Activated B cell treated with CpG ODN at 0.5 μM for 24 hours (primary cell): ENCODE measurements at regions of chr14 and their contacts with region 1.

Region 1: DNA sequence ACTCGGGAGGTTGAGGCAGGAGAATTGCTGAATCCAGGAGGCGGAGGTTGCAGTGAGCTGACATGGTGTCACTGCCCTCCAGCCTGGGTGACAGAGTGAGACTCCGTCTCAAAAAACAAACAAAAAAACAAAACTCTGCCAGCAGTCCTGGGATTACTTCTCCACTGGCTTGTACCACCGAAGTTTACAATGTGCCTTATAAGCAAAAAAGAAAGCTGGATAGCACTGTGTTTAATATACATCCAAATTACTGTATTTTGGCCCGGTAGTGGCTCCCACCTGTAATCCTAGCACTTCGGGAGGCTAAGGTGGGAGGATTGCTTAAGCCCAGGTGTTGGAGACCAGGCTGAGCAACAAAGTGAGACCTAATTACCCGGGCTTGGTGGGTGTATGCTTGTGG is 16.7 kb downstream of the HOMEZ start:
- DNase-seq: no peak
- ATAC-seq: no peak
- H3K4me3 Mint-ChIP-seq: no peak overlapping the region
- H3K27ac Mint-ChIP-seq: no peak overlapping the region
- H3K4me1 Mint-ChIP-seq: no peaks in the 10 kb centered on the region
- H3K27me3 Mint-ChIP-seq: peaks cover 13% of the 10 kb centered on the region
- CTCF ChIP-seq: no peak

Region 2: DNA sequence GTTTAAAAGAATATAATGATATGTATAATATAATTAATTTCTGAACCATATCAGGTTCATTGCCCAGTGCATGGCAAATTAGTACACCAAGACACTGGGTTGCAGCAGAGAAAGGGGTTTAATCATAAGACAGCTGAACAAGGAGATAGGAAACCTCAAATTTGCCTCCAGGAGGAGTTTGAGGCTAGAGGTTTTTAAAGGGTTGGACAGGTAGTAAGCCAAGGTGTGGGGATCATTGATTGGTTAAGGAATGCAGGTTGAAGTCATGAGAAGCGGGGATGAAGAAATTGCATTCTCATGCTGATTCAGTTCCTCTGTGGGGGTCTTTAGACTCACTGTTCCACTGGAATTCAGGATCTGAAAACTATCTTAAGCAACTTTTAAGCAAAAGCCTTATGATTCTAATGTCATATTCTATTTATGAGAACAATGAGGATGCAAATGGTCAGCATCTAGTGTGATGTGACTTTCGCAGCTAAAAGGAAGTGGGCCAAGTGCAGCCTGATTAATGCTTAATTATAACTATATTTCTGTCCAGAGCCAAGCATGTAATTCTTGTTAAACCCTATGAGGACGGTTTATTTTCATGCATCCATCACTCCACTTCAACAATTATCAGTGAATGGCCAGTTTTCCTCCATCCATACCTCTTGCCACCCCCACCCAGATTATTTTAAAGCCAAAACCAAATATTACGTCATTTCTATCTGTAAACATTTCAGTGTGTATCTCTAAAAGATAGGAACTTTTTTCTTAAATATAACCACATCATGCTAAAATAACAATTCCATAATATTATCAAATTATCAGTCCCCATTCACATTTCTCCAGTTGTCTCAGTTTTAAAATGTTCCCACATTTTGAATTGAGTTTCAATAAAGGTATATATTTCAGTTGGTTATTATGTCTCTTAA is 16.5 kb before region 1 on chr14:
- CTCF ChIA-PET with region 1: no interaction called
- POLR2A ChIA-PET with region 1: no interaction called
- intact Hi-C with region 1: no loop called
- DNase-seq: no peak
- ATAC-seq: no peak
- H3K4me3 Mint-ChIP-seq: no peak overlapping the region
- H3K27ac Mint-ChIP-seq: no peak overlapping the region
- H3K4me1 Mint-ChIP-seq: no peaks in the 10 kb centered on the region
- H3K27me3 Mint-ChIP-seq: peaks cover 22% of the 10 kb centered on the region
- CTCF ChIP-seq: no peak

Region 3: DNA sequence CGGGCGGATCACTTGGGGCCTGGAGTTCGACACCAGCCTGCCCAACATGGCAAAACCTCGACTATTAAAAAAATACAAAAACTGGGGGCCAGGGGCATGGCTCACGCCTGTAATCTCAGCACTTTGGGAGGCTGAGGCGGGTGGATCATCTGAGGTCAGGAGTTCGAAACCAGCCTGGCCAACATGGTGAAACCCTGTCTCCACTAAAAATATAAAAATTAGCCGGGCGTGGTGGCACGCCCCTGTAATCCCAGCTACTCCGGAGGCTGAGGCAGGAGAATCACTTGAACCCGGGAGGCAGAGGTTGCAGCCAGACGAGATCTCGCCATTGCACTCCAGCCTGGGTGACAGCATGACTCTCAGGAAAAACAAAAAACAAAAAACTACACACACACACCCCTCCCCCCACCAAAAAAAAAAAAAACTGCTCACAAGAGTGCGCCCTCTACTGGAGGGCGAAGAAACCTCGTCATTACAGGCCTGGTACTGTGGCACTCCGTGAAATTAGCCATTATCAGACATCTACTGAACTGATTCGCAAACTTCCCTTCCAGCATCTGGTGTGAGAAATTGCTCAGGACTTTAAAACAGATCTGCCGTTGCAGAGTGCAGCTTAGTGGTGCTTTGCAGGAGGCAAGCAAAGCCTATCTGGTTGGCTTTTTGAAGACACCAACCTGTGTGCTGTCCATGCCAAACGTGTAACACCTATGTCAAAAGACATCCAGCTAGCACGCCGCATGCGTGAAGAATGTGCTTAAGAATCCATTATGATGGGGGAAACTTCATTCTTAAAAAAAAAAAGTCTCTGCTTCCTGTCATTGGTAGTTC is 25.8 kb after region 1 on chr14:
- CTCF ChIA-PET with region 1: interaction called, 3 read pairs
- POLR2A ChIA-PET with region 1: interaction called, 5 read pairs
- intact Hi-C with region 1: loop called (anchors 1 kb)
- DNase-seq: peak; percentile 30
- ATAC-seq: peak; percentile 88
- H3K4me3 Mint-ChIP-seq: no peak overlapping the region
- H3K27ac Mint-ChIP-seq: no peak overlapping the region
- H3K4me1 Mint-ChIP-seq: peaks cover 15% of the 10 kb centered on the region
- H3K27me3 Mint-ChIP-seq: no peaks in the 10 kb centered on the region
- CTCF ChIP-seq: no peak

Region 4: DNA sequence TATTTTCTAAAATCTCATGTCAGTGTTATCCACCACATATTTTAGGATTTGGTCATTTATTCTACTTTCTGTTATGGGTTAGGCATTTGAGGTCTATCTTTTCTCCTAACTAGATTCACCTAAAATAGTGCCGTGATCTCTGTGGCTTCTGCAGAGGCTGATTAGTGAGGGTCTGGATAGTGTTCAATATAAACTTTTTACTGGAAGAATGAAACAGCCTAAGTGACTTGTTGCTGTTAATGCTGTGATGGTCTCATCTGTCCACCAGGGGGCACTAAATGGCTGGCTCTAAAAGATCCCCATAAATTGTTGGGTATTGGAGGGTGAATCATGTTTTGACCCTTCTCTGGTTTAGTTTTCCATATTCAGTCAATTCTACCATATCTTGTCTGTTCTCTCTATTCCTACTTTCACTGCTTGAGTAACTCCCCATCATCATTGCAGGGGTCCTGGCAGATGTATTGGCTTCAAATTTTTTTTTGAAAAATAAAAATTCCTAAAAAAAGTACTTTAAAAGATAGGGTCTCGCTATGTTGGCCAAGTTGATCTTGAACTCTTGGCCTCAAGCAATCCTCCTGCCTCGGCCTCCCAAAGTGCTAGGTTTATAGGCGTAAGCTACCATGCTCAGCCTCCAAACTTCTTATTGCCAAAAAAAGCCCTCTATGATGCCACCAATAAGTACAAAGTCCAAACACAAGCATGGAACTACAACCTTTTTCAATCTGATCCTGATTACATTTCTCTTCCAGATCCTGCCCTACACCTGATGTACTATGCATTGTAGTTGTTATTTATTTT is 59.0 kb after region 1 on chr14:
- CTCF ChIA-PET with region 1: interaction called, 3 read pairs
- POLR2A ChIA-PET with region 1: no interaction called
- intact Hi-C with region 1: loop called (anchors 1 kb)
- DNase-seq: no peak
- ATAC-seq: peak; percentile 73
- H3K4me3 Mint-ChIP-seq: no peak overlapping the region
- H3K27ac Mint-ChIP-seq: no peak overlapping the region
- H3K4me1 Mint-ChIP-seq: peaks cover 3% of the 10 kb centered on the region
- H3K27me3 Mint-ChIP-seq: no peaks in the 10 kb centered on the region
- CTCF ChIP-seq: peak; percentile 42

Region 5: GRCh38 chr14:23478111-23478759 is 209.0 kb after region 1 on chr14:
- CTCF ChIA-PET with region 1: no interaction called
- POLR2A ChIA-PET with region 1: no interaction called
- intact Hi-C with region 1: no loop called
- DNase-seq: peak; percentile 25
- ATAC-seq: peak; percentile 62
- H3K4me3 Mint-ChIP-seq: no peak overlapping the region
- H3K27ac Mint-ChIP-seq: no peak overlapping the region
- H3K4me1 Mint-ChIP-seq: peaks cover 2% of the 10 kb centered on the region
- H3K27me3 Mint-ChIP-seq: no peaks in the 10 kb centered on the region
- CTCF ChIP-seq: no peak

Region 6: DNA sequence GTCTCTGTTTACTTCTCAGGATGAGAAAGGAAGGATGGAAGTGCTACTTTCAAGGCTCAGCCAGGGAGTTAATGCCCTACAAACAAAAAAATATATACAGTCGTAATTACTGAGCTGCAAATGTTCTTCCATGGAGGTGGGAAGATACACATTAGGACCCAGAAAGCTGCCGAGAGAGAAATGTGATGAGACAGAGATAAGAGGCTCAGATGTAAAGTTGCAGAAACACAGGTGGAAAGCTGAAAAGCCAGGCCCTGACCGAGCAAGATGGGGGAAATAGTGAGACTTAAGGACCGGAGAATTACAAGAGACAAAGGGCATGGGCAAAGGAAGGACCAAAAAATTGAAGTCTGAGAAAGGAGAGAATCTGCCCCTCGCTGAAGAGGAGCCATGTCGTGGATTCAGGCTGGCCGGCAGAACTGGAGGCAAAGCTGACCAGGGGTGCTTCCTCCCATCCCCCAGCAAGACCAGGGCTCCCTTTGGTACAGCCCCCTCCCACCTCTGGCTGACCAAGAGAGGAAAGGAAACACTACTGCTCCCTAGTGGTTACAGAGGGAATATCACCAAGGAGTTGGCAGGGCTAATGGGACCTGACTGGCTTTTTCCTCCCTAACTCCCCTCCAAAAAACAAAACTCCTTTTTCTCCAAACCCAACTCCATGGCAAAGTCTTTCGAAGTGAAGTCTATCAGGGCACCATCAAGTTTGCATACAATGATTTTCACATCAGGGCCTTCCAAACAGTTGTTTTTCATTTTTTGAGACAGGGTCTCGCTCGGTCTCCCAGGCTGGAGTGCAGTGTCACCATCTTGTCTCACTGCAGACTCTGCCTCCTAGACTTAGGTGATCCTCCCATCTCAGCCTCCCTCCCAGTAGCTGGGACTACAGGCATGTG is 270.3 kb after region 1 on chr14:
- CTCF ChIA-PET with region 1: no interaction called
- POLR2A ChIA-PET with region 1: no interaction called
- intact Hi-C with region 1: loop called (anchors 1 kb)
- DNase-seq: no peak
- ATAC-seq: peak; percentile 76
- H3K4me3 Mint-ChIP-seq: no peak overlapping the region
- H3K27ac Mint-ChIP-seq: no peak overlapping the region
- H3K4me1 Mint-ChIP-seq: no peaks in the 10 kb centered on the region
- H3K27me3 Mint-ChIP-seq: peaks cover 2% of the 10 kb centered on the region
- CTCF ChIP-seq: peak; percentile 29